ENCODE measurements at regions of chr14 and their contacts with region 1.

Region 1: GRCh38 chr14:51180577-51180976 is 59.5 kb upstream of the TMX1 start:
- DNase-seq: no peak
- H3K4me3 ChIP-seq: no peak overlapping the region
- H3K27ac ChIP-seq: no peak overlapping the region
- H3K4me1 ChIP-seq: no peaks in the 10 kb centered on the region
- H3K27me3 ChIP-seq: no peaks in the 10 kb centered on the region
- CTCF ChIP-seq: no peak
- POLR2A ChIP-seq: no peak

Region 2: GRCh38 chr14:49641697-49642129 is 1538.9 kb before region 1 on chr14:
- intact Hi-C with region 1: loop called (anchors 10 kb)
- DNase-seq: no peak
- H3K4me3 ChIP-seq: no peak overlapping the region
- H3K27ac ChIP-seq: no peak overlapping the region
- H3K4me1 ChIP-seq: peaks cover 0 to 13% of the 10 kb centered on the region in 2 donors
- H3K27me3 ChIP-seq: no peaks in the 10 kb centered on the region
- CTCF ChIP-seq: no peak
- POLR2A ChIP-seq: no peak

Region 3: GRCh38 chr14:51195286-51195685 is 14.7 kb after region 1 on chr14:
- intact Hi-C with region 1: no loop called
- DNase-seq: no peak
- H3K4me3 ChIP-seq: no peak overlapping the region
- H3K27ac ChIP-seq: no peak overlapping the region
- H3K4me1 ChIP-seq: no peaks in the 10 kb centered on the region
- H3K27me3 ChIP-seq: no peaks in the 10 kb centered on the region
- CTCF ChIP-seq: no peak
- POLR2A ChIP-seq: no peak

Region 4: GRCh38 chr14:51248016-51248987 is 67.7 kb after region 1 on chr14:
- intact Hi-C with region 1: no loop called
- DNase-seq: no peak
- H3K4me3 ChIP-seq: no peak overlapping the region
- H3K27ac ChIP-seq: no peak overlapping the region
- H3K4me1 ChIP-seq: peaks cover 0 to 3% of the 10 kb centered on the region in 2 donors
- H3K27me3 ChIP-seq: no peaks in the 10 kb centered on the region
- CTCF ChIP-seq: no peak
- POLR2A ChIP-seq: no peak

Region 5: GRCh38 chr14:51828017-51828797 is 647.6 kb after region 1 on chr14:
- intact Hi-C with region 1: no loop called
- DNase-seq: no peak
- H3K4me3 ChIP-seq: no peak overlapping the region
- H3K27ac ChIP-seq: no peak overlapping the region
- H3K4me1 ChIP-seq: no peaks in the 10 kb centered on the region
- H3K27me3 ChIP-seq: no peaks in the 10 kb centered on the region
- CTCF ChIP-seq: no peak
- POLR2A ChIP-seq: no peak

Measured in breast epithelium (tissue), 4 donors.